Activated naive CD4-positive, alpha-beta T cell treated with anti-CD3 and anti-CD28 coated beads for 36 hours (primary cell): ENCODE measurements at regions of chr20 and their contacts with region 1.

Region 1: DNA sequence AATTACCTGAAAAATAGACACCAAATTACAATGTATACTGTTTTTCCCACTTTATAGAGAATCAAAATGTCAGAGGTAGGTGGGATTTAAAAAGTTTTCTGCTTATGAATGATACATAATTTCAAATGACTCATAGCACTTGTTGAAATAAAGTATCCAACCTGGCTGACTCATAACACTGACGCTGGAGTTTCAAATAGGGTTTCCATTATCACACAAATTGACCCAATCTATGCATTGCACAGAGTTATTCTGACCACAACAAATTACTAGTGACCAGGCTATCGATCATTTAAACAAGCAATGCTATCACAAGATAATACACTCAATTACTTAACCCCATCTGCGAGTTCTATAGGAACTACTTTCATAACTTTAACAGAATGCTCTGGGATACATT is 31.9 kb upstream of the PRELID3B start:
- DNase-seq: peak; percentile 17
- H3K4me3 Mint-ChIP-seq: no peak overlapping the region
- H3K27ac Mint-ChIP-seq: no peak overlapping the region
- H3K4me1 Mint-ChIP-seq: peaks cover 49% of the 10 kb centered on the region
- H3K27me3 Mint-ChIP-seq: peaks cover 9% of the 10 kb centered on the region

Region 2: GRCh38 chr20:59042796-59043660 is 31.4 kb before region 1 on chr20:
- CTCF ChIA-PET with region 1: no interaction called
- intact Hi-C with region 1: loop called (anchors 5 kb)
- DNase-seq: peak; percentile 92
- H3K4me3 Mint-ChIP-seq: peak overlapping the region; percentile 93
- H3K27ac Mint-ChIP-seq: peak overlapping the region; percentile 84
- H3K4me1 Mint-ChIP-seq: peaks cover 40% of the 10 kb centered on the region
- H3K27me3 Mint-ChIP-seq: no peaks in the 10 kb centered on the region

Region 3: DNA sequence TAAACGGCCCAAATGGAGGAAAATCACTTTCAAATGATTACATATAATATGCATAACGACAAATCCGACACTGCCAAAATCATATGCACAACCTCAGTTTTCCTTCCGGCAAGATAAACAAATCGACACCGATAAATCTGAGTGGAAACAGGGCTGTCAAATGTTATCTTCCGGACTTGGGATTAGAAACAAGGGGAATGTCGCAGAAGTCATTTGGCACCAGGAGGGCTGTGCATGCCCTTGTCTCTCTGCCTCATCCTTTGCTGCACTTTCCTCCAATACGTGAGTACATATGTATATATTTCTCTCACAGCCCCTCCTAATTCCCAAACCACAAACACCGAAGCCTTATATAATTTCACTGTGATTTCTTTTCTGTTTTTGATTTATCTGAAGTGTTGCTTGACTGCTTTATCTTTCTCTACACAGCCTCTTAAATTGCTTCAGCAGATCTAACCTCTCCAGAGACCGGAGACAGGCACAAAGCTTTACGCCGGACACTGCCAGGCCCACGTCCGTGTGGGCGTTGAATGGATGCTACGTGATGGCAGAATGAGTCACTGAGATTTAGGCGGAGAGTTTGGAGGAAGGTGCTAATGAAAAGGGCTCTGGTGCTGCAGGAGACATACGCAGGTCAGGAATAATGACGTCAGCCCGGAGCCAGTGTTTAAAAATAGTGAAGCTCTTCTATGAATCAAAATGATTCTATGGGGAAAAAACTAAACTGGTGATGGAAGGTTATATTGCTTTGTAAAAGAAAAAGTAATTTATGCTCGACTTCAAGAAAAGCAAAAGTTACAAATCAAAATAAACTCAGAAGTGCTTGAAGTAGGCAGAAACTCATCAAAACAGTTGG is 10.9 kb before region 1 on chr20:
- CTCF ChIA-PET with region 1: no interaction called
- intact Hi-C with region 1: no loop called
- DNase-seq: no peak
- H3K4me3 Mint-ChIP-seq: no peak overlapping the region
- H3K27ac Mint-ChIP-seq: no peak overlapping the region
- H3K4me1 Mint-ChIP-seq: no peaks in the 10 kb centered on the region
- H3K27me3 Mint-ChIP-seq: peaks cover 4% of the 10 kb centered on the region

Region 4: DNA sequence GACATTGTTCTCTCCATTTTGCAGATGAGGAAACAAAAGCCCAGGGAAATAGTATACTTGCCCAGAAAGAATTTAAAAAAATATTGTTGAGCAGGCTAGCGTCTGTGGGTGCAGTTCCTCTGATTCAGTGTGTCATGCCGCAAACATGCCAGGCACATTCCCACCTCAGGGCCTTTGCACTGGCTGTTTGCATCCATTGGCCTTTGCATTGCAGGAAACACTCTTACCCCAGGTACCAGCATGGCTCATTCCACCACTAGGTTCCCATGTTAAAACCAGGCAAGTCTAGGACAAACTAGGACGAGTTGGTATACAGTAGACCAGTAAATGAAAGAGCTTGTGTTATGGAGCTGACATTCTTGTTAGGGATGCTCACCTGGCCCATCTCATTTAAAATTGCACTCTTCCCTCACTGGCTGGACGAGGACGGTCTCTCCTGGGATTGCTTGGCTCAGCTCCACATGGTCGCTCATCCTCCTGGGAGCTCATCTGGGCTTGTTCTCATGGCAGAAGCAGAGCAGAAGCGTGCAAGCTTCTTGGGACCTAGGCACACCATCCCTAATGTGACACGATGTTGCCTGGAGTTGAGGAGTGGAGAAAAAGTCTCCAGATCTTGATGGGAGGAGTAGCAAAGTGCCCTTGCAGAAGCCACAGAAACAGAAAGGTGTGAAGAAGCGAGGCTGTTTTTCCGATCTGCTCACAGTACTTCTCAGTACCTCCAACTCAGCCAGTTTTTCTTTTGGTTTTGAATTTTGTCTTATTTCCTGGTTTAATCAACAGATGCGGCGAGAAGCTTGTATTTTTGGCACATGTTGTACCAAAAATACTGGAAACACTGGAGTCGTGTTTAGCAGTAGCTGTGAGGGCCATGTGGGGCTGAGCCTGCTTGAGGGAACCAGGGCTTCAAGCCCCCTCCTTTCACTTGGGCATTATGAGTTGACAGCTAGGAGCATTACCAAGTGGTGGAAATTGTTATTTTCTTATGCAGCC is 103.1 kb after region 1 on chr20:
- CTCF ChIA-PET with region 1: no interaction called
- intact Hi-C with region 1: no loop called
- DNase-seq: peak; percentile 67
- H3K4me3 Mint-ChIP-seq: peak overlapping the region; percentile 52
- H3K27ac Mint-ChIP-seq: peak overlapping the region; percentile 91
- H3K4me1 Mint-ChIP-seq: peaks cover 81% of the 10 kb centered on the region
- H3K27me3 Mint-ChIP-seq: no peaks in the 10 kb centered on the region